G401 (cell line): ENCODE measurements at regions of chr17 and their contacts with region 1.

Region 1: GRCh38 chr17:67800495-67800928 is 24.8 kb upstream of the BPTF start:
- DNase-seq: peak; percentile 51

Region 2: GRCh38 chr17:67707442-67707841 is 93.1 kb before region 1 on chr17:
- in situ Hi-C with region 1: no loop called
- DNase-seq: no peak

Region 3: DNA sequence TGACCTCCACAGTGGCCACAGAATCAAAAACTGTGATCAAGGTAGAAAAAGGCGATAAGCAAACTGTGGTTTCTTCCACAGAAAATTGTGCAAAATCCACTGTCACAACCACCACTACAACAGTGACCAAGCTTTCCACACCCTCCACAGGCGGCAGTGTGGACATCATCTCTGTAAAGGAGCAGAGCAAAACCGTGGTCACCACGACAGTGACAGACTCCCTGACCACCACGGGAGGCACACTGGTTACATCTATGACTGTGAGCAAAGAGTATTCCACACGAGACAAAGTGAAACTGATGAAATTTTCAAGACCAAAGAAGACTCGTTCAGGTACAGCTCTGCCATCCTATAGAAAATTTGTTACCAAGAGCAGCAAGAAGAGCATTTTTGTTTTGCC is 112.1 kb after region 1 on chr17:
- in situ Hi-C with region 1: no loop called
- DNase-seq: no peak

Region 4: GRCh38 chr17:67980456-67980855 is 179.9 kb after region 1 on chr17:
- in situ Hi-C with region 1: loop called (anchors 10 kb)
- DNase-seq: peak; percentile 81